CD4-positive, alpha-beta memory T cell (primary cell): ENCODE measurements at regions of chr2 and their contacts with region 1.

Region 1: GRCh38 chr2:175111200-175111657 is 56.8 kb downstream of the ATF2 start:
- DNase-seq: peak in 4 of 5 donors; percentile 42 to 54 (median 44)
- H3K4me3 ChIP-seq: no peak overlapping the region
- H3K4me3 Mint-ChIP-seq: no peak overlapping the region
- H3K27ac ChIP-seq: no peak overlapping the region
- H3K27ac Mint-ChIP-seq: peak overlapping the region in 6 of 7 donors; percentile 10 to 72 (median 26)
- H3K4me1 ChIP-seq: no peaks in the 10 kb centered on the region
- H3K4me1 Mint-ChIP-seq: peaks cover 0 to 5% (median 5%) of the 10 kb centered on the region in 4 donors
- H3K27me3 ChIP-seq: no peaks in the 10 kb centered on the region
- H3K27me3 Mint-ChIP-seq: no peaks in the 10 kb centered on the region

Region 2: DNA sequence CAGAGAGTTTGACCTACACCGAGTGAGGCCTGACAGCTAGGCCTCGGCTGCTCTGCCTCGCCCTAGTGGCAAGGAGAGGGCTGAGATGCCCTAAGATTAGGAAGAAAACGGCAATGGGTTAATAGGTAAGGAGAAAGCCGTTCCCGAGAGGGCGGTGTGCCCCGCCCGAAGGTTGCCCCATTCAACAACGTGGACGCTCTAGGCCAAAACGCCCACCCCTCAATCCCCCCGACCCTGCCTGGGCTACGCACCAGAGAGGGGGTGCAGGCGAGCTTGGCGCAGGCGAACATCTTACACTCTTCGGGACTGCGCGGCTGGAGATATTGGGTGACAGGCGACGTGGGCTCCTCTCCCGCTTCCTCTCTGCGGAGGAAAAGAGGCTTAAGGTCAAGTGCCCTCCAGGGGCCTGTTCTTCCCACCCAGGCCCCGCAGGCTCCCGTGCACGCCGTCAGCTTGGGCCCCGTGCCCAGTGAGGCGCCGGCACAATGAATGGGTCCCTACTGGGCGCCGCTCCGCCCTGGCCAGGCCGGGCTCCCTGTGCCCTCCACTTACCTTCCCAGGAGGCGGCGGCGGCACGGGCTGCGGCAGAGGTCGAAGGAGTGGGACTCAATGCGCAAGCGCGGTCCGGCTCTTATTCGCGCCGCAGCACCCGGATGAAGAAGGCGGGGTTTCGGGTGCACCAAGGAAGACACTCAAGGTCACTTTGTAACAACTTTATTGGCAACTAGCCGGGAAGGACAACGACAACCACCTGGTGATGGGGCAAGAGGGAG is 70.1 kb after region 1 on chr2 and contains the start of gene ATP5MC3:
- CTCF ChIA-PET with region 1: interaction called, 5 read pairs
- POLR2A ChIA-PET with region 1: no interaction called
- intact Hi-C with region 1: loop called (anchors 1 kb)
- DNase-seq: peak; percentile 89 to 91 (median 90)
- H3K4me3 ChIP-seq: peak within 1 kb of the TSS; percentile 59 to 84
- H3K4me3 Mint-ChIP-seq: peak within 1 kb of the TSS; percentile 80 to 95 (median 93)
- H3K27ac ChIP-seq: peak within 1 kb of the TSS; percentile 83
- H3K27ac Mint-ChIP-seq: peak within 1 kb of the TSS; percentile 79 to 98 (median 95)
- H3K4me1 ChIP-seq: peaks cover 25% of the 10 kb centered on the region
- H3K4me1 Mint-ChIP-seq: peaks cover 14 to 22% (median 18%) of the 10 kb centered on the region in 4 donors
- H3K27me3 ChIP-seq: no peaks in the 10 kb centered on the region
- H3K27me3 Mint-ChIP-seq: peaks cover 0 to 2% of the 10 kb centered on the region in 2 donors
- total RNA-seq, gene ATP5MC3: 77.0 to 81.3 TPM

Region 3: GRCh38 chr2:175282290-175282689 is 171.1 kb after region 1 on chr2:
- CTCF ChIA-PET with region 1: interaction called, 12 read pairs
- POLR2A ChIA-PET with region 1: no interaction called
- intact Hi-C with region 1: no loop called
- DNase-seq: peak in 4 of 5 donors; percentile 6 to 22 (median 15)
- H3K4me3 ChIP-seq: no peak overlapping the region
- H3K4me3 Mint-ChIP-seq: no peak overlapping the region
- H3K27ac ChIP-seq: no peak overlapping the region
- H3K27ac Mint-ChIP-seq: no peak overlapping the region
- H3K4me1 ChIP-seq: no peaks in the 10 kb centered on the region
- H3K4me1 Mint-ChIP-seq: no peaks in the 10 kb centered on the region
- H3K27me3 ChIP-seq: no peaks in the 10 kb centered on the region
- H3K27me3 Mint-ChIP-seq: peaks cover 0 to 1% of the 10 kb centered on the region in 2 donors